Spleen (tissue), 13 donors: ENCODE measurements at regions of chr16 and their contacts with region 1.

Region 1: DNA sequence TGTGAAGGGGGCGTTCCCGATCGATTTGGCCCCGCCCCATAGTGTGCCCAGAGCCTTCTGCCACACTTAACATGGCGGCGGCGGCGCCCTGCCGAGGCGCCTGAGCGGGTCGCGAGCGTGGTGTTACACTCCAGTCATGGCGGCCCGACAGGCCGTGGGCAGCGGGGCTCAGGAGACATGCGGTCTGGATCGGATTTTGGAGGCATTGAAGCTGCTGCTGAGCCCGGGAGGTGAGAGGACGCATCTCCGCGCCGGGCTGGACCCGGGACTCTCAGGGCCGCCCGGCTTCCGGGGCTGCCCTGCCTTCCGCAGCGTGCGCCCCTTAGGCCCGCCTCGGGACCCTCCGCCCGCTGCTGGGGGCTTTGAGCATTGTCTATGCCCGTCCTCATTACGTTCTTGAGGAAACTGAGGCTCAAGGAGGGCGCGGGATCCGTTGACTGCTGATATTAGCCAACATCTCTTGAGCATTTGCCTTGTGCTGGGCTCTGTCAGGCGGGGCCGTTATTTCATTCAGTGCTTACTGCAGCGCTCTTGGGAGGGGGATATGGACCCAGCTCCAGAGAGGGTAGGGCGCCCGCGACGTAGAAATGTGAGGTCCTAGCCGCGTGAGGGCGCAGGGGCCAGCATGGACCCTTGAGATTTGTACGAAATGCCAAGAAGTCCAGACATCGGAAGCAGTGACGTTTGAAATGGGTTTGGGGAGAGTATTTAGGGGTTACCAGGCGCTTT is at the start of gene TANGO6:
- DNase-seq: peak; percentile 96
- H3K4me3 ChIP-seq: peak within 1 kb of the TSS; percentile 82 to 98 (median 92)
- H3K27ac ChIP-seq: peak within 1 kb of the TSS; percentile 84 to 92 (median 91)
- H3K4me1 ChIP-seq: peaks cover 11 to 50% (median 29%) of the 10 kb centered on the region in 6 donors
- H3K27me3 ChIP-seq: no peaks in the 10 kb centered on the region
- CTCF ChIP-seq: peak in 3 of 11 experiments; percentile 14 to 28 (median 27)
- POLR2A ChIP-seq: peak in 1 of 3 donors; percentile 2
- total RNA-seq, gene TANGO6: 17.1 to 35.2 (median 26.9) TPM

Region 2: GRCh38 chr16:68538880-68539701 is 304.6 kb before region 1 on chr16 and contains the start of gene ZFP90:
- intact Hi-C with region 1: loop called (anchors 10 kb)
- DNase-seq: peak; percentile 96
- H3K4me3 ChIP-seq: peak within 1 kb of the TSS; percentile 68 to 99 (median 96)
- H3K27ac ChIP-seq: peak within 1 kb of the TSS; percentile 84 to 92 (median 90)
- H3K4me1 ChIP-seq: peaks cover 0 to 18% (median 14%) of the 10 kb centered on the region in 6 donors
- H3K27me3 ChIP-seq: no peaks in the 10 kb centered on the region
- CTCF ChIP-seq: no peak
- POLR2A ChIP-seq: peak in 1 of 3 donors; percentile 1
- total RNA-seq, gene ZFP90: 21.5 to 53.1 (median 28.2) TPM